Activated T-helper 1 cell treated with anti-CD3 and anti-CD28 coated beads, Interleukin-12 subunit alpha, Interleukin-12 subunit beta, Interleukin-2, Interleukin-4 antibody, amounts not matched to agents 30 ng/mL and 10 ng/mL and 1 ng/mL, durations not matched to agents 14 hours and 24 hours and 36 hours (primary cell): ENCODE measurements at regions of chr11 and their contacts with region 1.

Region 1: DNA sequence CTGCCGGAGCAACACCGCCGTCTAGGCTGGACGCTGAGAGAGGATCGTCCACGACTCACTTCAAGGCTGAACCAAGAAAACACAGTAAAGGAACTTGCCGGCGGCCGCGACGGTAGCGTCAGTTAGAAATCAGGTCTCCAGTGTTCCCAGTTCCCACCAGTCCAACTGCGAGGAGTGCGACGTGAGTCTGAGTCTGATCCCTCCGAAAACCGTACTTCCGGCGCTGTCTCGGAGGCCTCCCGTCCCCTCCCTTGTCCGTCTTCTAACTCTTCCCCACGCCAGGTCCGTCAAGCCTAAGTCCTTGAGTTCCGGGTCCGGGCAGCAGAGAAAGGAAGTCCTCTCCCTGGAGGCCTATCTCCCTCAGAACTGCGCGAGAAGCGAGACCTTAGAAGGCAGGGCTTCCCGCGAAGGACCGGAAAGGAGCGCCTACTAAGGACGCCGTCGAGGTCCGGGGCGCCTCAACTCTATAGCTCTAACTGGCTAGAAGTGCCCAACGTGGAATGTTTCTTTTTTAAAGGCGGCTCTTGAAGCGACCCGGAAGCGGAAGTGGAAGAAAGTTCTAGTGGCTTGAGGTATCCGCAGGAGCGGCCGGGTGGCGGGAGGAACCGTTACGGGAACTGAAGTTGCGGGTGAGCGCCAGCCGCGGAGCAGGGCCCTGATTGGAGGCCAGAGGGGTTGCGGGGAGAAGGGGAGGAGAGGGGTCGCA is at the starts of genes BANF1 and EIF1AD:
- DNase-seq: peak; percentile 93
- H3K4me3 Mint-ChIP-seq: peak within 1 kb of the TSS; percentile 99
- H3K27ac Mint-ChIP-seq: peak within 1 kb of the TSS; percentile 99
- H3K4me1 Mint-ChIP-seq: peaks cover 26% of the 10 kb centered on the region
- H3K27me3 Mint-ChIP-seq: no peaks in the 10 kb centered on the region
- total RNA-seq, gene BANF1: 282 and 284 TPM in 2 replicates
- total RNA-seq, gene EIF1AD: 69.0 and 70.7 TPM in 2 replicates

Region 2: GRCh38 chr11:65615229-65615941 is 386.7 kb before region 1 on chr11 and contains the start of gene PCNX3:
- intact Hi-C with region 1: loop called (anchors 1 kb)
- DNase-seq: peak; percentile 100
- H3K4me3 Mint-ChIP-seq: peak within 1 kb of the TSS; percentile 97
- H3K27ac Mint-ChIP-seq: peak within 1 kb of the TSS; percentile 94
- H3K4me1 Mint-ChIP-seq: peaks cover 27% of the 10 kb centered on the region
- H3K27me3 Mint-ChIP-seq: no peaks in the 10 kb centered on the region
- total RNA-seq, gene PCNX3: 55.0 and 55.2 TPM in 2 replicates

Region 3: GRCh38 chr11:65779851-65780577 is 222.1 kb before region 1 on chr11:
- intact Hi-C with region 1: loop called (anchors 1 kb)
- DNase-seq: peak; percentile 78
- H3K4me3 Mint-ChIP-seq: peak overlapping the region; percentile 88
- H3K27ac Mint-ChIP-seq: peak overlapping the region; percentile 91
- H3K4me1 Mint-ChIP-seq: peaks cover 27% of the 10 kb centered on the region
- H3K27me3 Mint-ChIP-seq: peaks cover 20% of the 10 kb centered on the region

Region 4: GRCh38 chr11:65888163-65888814 is 113.8 kb before region 1 on chr11 and contains the start of gene FIBP:
- intact Hi-C with region 1: loop called (anchors 1 kb)
- DNase-seq: peak; percentile 90
- H3K4me3 Mint-ChIP-seq: peak within 1 kb of the TSS; percentile 99
- H3K27ac Mint-ChIP-seq: peak within 1 kb of the TSS; percentile 96
- H3K4me1 Mint-ChIP-seq: peaks cover 58% of the 10 kb centered on the region
- H3K27me3 Mint-ChIP-seq: no peaks in the 10 kb centered on the region
- total RNA-seq, gene FIBP: 86.8 and 93.2 TPM in 2 replicates

Region 5: DNA sequence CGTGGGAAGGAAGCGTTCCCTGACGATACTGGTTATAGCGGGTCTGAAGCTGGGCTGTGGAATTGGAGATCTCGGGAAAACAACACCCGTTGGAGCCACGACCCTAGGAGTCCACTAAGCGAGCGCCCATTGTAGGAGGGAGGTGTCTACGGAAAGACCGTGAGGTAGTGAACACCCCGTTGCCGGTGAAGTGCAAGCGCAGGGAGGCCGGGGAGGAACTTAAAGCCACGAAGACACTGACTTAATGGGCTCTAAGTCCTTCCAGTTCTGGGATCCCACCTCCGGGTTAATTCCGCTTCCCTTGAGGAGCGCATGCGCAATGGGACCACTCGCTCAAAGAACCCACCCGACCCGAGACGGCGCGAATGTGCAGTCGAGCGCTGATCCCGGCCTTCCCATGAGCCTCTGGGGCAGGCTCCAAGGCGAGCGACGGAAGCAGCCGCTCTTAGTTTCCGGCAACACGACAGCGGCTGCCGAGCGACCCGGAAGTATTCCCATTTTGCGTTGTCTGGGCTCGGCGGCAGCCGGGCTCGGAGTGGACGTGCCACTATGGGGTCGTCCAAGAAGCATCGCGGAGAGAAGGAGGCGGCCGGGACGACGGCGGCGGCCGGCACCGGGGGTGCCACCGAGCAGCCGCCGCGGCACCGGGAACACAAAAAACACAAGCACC is 40.7 kb before region 1 on chr11 and contains the start of gene SART1:
- intact Hi-C with region 1: loop called (anchors 1 kb)
- DNase-seq: peak; percentile 94
- H3K4me3 Mint-ChIP-seq: peak within 1 kb of the TSS; percentile 98
- H3K27ac Mint-ChIP-seq: peak within 1 kb of the TSS; percentile 99
- H3K4me1 Mint-ChIP-seq: peaks cover 41% of the 10 kb centered on the region
- H3K27me3 Mint-ChIP-seq: no peaks in the 10 kb centered on the region
- total RNA-seq, gene SART1: 110 TPM in 2 replicates

Region 6: DNA sequence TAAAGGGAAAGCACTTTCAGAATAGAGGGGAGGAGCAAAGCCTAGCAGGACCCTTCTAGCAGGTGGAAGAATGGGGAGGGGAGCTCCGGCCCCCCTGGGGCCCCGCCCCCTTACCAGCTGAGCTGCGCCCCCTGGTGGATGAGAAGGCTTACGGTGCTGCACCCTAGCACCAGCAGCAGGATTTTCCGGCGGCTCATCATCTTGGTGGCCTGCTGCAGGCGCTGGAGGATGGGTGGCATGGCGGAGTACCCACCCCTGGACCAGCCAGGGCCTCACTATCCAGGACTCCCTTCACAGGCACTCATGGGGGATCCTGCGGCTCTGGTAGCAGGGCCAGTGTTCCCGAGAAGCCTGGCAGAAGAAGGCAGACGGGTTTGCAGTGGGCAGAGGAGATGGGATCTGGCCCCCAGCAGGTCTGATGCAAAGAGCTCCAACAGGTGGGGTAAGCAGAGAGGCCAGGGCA is 43.1 kb after region 1 on chr11:
- intact Hi-C with region 1: loop called (anchors 2 kb)
- DNase-seq: peak; percentile 79
- H3K4me3 Mint-ChIP-seq: no peak overlapping the region
- H3K27ac Mint-ChIP-seq: peak overlapping the region; percentile 11
- H3K4me1 Mint-ChIP-seq: peaks cover 16% of the 10 kb centered on the region
- H3K27me3 Mint-ChIP-seq: peaks cover 7% of the 10 kb centered on the region

Region 7: GRCh38 chr11:66268283-66268951 is 266.3 kb after region 1 on chr11 and contains the start of gene RAB1B:
- intact Hi-C with region 1: loop called (anchors 5 kb)
- DNase-seq: peak; percentile 100
- H3K4me3 Mint-ChIP-seq: peak within 1 kb of the TSS; percentile 90
- H3K27ac Mint-ChIP-seq: peak within 1 kb of the TSS; percentile 90
- H3K4me1 Mint-ChIP-seq: peaks cover 35% of the 10 kb centered on the region
- H3K27me3 Mint-ChIP-seq: peaks cover 2% of the 10 kb centered on the region
- total RNA-seq, gene RAB1B: 123 and 124 TPM in 2 replicates